H1 (cell line): ENCODE measurements at regions of chr7 and their contacts with region 1.

Region 1: DNA sequence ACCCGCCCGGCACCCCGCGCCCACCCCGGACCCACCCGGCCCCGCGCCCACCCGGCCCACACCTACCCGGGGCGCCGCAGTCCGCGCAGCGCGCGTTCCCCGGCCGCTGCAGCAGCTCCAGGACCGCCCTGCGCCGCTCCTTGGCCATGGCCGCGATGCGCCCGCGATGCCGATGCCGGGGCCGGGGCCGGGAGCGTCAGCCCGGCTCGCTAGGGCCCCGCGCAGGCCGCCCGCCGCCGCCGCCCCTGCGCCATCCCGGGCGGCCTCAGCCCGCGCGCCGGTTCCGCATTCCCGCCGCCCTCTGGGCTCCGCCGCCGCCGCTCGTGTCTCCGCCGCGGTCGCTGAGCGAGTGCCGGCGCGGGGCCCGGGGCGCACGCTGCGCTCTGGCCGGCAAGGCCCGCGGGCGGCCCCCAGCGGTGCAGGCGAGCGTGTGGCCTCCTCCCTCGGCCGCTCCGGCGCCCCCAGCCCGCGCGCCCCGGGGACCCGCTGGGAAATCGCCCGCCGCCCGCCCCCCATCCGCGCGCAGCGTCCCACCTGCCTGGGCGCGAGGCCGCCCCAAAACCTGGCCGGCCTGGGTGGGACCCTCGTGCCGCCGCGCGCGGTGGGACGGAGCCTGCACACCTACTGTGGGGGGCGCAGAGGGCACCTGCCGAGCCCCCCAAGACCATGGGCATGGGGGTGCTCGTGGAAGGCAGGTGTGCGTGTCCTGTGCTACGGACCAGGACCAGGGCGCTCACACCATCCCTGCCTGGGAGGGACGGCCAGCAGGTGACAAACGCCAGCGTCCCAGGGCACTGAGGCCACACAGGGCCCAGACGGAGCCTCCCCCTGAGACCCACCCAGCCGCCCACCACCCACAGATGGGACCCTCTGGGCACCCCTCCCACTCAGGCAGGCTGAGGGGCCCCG is at the start of gene ADAP1:
- DNase-seq: no peak
- H3K4me3 ChIP-seq: peak within 1 kb of the TSS; percentile 27 to 62 (median 46)
- H3K27ac ChIP-seq: no peak within 1 kb of the TSS
- H3K4me1 ChIP-seq: peaks cover 0 to 12% (median 6%) of the 10 kb centered on the region in 4 experiments; a peak in 5 of 7 replicates
- H3K27me3 ChIP-seq: peaks cover 2 to 26% (median 19%) of the 10 kb centered on the region in 4 experiments; a peak in 6 of 7 replicates
- CTCF ChIP-seq: peak in 1 of 3 experiments; percentile 12; a peak in 1 of 4 replicates
- EP300 ChIP-seq: no peak
- POLR2A ChIP-seq: no peak
- RAD21 ChIP-seq: peak in 1 of 2 experiments; percentile 51; a peak in 2 of 4 replicates
- total RNA-seq, gene ADAP1: 5.4 and 5.8 TPM in 2 replicates

Region 2: GRCh38 chr7:909358-910329 is 44.9 kb before region 1 on chr7:
- CTCF ChIA-PET with region 1: interaction called, 36 read pairs
- POLR2A ChIA-PET with region 1: interaction called, 3 read pairs
- DNase-seq: no peak
- H3K4me3 ChIP-seq: peak overlapping the region in 1 of 4 experiments; percentile 49; a peak in 3 of 8 replicates
- H3K27ac ChIP-seq: no peak overlapping the region
- H3K4me1 ChIP-seq: peaks cover 0 to 12% (median 2%) of the 10 kb centered on the region in 4 experiments; a peak in 3 of 7 replicates
- H3K27me3 ChIP-seq: peaks cover 0 to 11% (median 9%) of the 10 kb centered on the region in 4 experiments; a peak in 4 of 7 replicates
- CTCF ChIP-seq: no peak
- EP300 ChIP-seq: no peak
- POLR2A ChIP-seq: no peak
- RAD21 ChIP-seq: no peak

Region 3: DNA sequence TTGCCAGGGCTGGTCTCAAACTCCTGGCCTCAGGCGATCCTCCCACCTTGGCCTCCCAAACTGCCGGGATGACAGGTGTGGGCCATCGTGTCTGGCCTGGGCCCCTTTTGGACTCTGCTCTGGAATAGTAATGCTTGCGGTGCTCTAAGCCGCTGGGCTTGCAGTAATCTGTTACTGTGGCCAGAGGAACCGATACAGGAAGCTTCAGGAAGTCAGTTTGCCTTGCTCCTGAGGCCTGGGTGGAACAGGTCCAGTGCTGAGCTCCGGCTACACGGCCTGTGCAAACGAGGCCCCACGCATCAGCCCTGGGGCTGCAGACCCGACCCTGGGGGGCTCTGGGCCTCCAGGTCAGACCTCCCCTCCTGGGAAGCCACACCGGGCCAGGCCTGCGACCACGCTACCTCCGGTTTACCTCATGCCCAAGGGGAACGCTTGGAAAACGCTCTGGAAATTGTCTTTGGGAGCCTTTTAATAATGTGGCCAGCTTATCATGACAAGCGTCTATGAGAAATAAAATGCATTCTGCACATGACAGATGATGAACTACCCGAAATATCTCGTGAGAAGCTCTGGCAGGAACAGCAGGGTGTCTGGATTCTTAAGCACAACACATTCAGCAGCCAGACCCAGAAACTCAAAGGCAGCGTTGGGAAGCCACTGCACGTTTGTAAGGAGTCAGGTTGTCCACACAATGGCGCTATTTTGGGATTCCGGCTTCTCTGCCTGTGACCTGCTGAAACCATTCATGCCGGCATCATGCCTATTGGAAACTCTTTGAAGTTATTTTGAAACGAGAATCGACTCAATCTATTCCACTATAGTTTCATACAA is 10.0 kb after region 1 on chr7:
- CTCF ChIA-PET with region 1: interaction called, 37 read pairs
- POLR2A ChIA-PET with region 1: interaction called, 5 read pairs
- DNase-seq: no peak
- H3K4me3 ChIP-seq: no peak overlapping the region
- H3K27ac ChIP-seq: no peak overlapping the region
- H3K4me1 ChIP-seq: peaks cover 0 to 9% (median under 1%) of the 10 kb centered on the region in 4 experiments; a peak in 3 of 7 replicates
- H3K27me3 ChIP-seq: no peaks in the 10 kb centered on the region
- CTCF ChIP-seq: peak; percentile 42 to 63 (median 47)
- EP300 ChIP-seq: no peak
- POLR2A ChIP-seq: peak in 1 of 2 experiments; percentile 49; a peak in 1 of 3 replicates
- RAD21 ChIP-seq: peak; percentile 31 to 41; a peak in 3 of 4 replicates